OCI-LY7 (cell line): ENCODE measurements at regions of chr2 and their contacts with region 1.

Region 1: DNA sequence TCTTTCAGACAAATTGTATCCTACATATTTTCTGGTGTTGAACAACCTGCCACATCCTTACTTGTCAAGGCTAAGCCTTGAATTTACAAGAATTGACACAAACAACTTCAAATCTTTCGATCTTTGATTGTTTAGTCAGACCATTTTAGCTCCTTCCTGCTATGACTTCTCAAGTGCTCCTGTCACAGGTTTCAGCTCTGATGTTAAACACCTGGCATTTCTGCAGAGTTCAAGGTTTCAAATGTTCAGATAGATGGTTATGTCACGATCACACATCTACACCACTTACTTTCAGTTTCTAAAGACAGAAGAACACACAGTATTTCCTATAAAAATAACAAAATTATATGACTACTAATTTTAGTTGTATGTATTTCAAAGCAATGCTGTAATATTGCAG is 84.0 kb downstream of the RND3 start:
- DNase-seq: no peak
- H3K4me3 ChIP-seq: no peak overlapping the region
- H3K27ac ChIP-seq: no peak overlapping the region
- H3K4me1 ChIP-seq: no peaks in the 10 kb centered on the region
- CTCF ChIP-seq: no peak

Region 2: GRCh38 chr2:150303281-150303680 is 100.2 kb before region 1 on chr2:
- CTCF ChIA-PET with region 1: no interaction called
- POLR2A ChIA-PET with region 1: no interaction called
- intact Hi-C with region 1: no loop called
- DNase-seq: no peak
- H3K4me3 ChIP-seq: no peak overlapping the region
- H3K27ac ChIP-seq: no peak overlapping the region
- H3K4me1 ChIP-seq: no peaks in the 10 kb centered on the region
- CTCF ChIP-seq: no peak

Region 3: DNA sequence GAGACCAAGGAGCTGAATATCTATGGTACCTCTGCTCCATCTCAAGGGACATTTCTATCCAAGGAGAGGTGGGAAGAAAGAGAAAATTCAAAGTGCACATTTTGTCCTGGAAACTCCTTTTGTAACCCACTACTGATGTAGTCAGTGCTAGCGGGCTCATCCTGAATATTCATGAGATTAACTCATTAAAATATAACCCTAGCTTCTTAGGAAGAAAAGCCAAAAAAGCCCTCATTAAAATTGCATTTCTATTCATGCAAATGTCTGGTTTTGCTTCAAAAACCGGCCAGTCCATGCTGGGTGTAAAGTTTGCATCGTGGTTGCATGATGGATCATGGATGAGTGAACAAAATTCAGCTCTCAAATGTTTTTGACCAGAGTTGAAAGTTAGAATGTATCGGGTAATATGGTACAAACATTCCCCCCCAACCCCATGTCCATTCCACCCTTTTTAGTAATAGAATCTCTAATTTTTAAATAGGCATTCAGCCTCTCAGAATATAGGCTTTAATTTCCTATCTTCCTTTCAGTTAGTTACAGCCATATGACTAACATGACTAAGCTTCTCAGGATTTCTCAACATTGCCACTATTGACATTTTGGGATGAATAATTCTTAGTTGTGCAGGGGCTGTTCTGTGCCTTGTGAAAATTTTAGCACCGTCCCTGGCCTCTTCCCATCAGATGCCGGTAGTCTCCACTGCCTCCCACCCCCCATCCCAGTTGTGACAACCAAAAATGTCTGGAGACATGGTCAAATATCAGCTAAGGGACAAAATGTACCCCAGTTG is 188.2 kb after region 1 on chr2:
- CTCF ChIA-PET with region 1: no interaction called
- POLR2A ChIA-PET with region 1: interaction called, 11 read pairs
- intact Hi-C with region 1: no loop called
- DNase-seq: no peak
- H3K4me3 ChIP-seq: no peak overlapping the region
- H3K27ac ChIP-seq: no peak overlapping the region
- H3K4me1 ChIP-seq: no peaks in the 10 kb centered on the region
- CTCF ChIP-seq: no peak